Psoas muscle (tissue), 8 donors: ENCODE measurements at regions of chr3 and their contacts with region 1.

Region 1: GRCh38 chr3:37855363-37855970 is 6.2 kb upstream of the CTDSPL start:
- DNase-seq: peak; percentile 86 to 90
- ATAC-seq: peak; percentile 68 to 80 (median 72)
- H3K4me3 ChIP-seq: no peak overlapping the region
- H3K27ac ChIP-seq: no peak overlapping the region
- H3K4me1 ChIP-seq: no peaks in the 10 kb centered on the region
- H3K27me3 ChIP-seq: peaks cover 0 to 3% (median 0%) of the 10 kb centered on the region in 3 donors
- CTCF ChIP-seq: peak; percentile 96

Region 2: GRCh38 chr3:37729119-37729518 is 126.3 kb before region 1 on chr3:
- intact Hi-C with region 1: no loop called
- DNase-seq: no peak
- ATAC-seq: peak in 2 of 4 donors; percentile 59 to 69
- H3K4me3 ChIP-seq: no peak overlapping the region
- H3K27ac ChIP-seq: no peak overlapping the region
- H3K4me1 ChIP-seq: no peaks in the 10 kb centered on the region
- H3K27me3 ChIP-seq: no peaks in the 10 kb centered on the region
- CTCF ChIP-seq: no peak

Region 3: GRCh38 chr3:37967260-37967881 is 111.9 kb after region 1 on chr3:
- intact Hi-C with region 1: loop called (anchors 2 kb)
- DNase-seq: peak; percentile 64
- ATAC-seq: peak; percentile 56 to 75 (median 68)
- H3K4me3 ChIP-seq: no peak overlapping the region
- H3K27ac ChIP-seq: no peak overlapping the region
- H3K4me1 ChIP-seq: peaks cover 19% of the 10 kb centered on the region
- H3K27me3 ChIP-seq: no peaks in the 10 kb centered on the region
- CTCF ChIP-seq: peak; percentile 68

Region 4: DNA sequence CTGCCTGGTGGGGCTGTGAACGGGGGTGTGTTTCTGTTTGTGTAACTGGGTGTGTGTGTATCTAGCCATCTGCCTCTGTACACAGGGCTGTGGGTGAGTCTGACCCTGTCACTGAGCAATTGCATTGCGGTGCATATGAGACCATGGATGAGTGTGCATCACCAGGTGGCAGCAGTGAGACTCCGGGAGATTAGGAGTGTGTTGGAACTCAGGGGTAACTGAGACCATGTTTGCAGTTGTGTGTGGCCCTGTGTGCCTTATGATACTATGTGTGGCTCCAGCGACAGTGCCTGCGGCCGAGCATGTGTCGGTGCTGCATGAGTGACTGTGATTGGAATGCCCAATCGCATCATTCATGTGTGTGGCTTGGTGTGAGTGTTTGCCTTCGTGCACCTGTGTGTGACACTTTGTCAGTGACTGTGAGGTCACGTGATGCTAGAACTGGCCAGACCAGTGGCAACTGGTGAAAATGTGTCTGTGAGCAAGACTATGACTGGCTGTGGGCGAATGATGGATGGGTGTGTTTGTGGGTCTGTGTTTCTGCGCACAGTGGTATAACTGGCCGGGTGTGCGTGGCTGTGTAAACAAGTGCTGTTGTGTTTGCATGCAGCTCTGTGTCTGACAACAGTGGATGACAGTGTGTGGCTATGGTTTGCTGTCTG is 149.1 kb after region 1 on chr3:
- intact Hi-C with region 1: loop called (anchors 2 to 10 kb)
- DNase-seq: peak; percentile 70 to 73
- ATAC-seq: peak; percentile 80 to 87 (median 80)
- H3K4me3 ChIP-seq: no peak overlapping the region
- H3K27ac ChIP-seq: no peak overlapping the region
- H3K4me1 ChIP-seq: peaks cover 6% of the 10 kb centered on the region
- H3K27me3 ChIP-seq: no peaks in the 10 kb centered on the region
- CTCF ChIP-seq: peak; percentile 58